AG04449 (cell line): ENCODE measurements at regions of chr14 and their contacts with region 1.

Region 1: GRCh38 chr14:23454445-23454856 is 15.1 kb upstream of the NGDN start:
- DNase-seq: no peak
- H3K4me3 ChIP-seq: no peak overlapping the region
- CTCF ChIP-seq: no peak

Region 2: DNA sequence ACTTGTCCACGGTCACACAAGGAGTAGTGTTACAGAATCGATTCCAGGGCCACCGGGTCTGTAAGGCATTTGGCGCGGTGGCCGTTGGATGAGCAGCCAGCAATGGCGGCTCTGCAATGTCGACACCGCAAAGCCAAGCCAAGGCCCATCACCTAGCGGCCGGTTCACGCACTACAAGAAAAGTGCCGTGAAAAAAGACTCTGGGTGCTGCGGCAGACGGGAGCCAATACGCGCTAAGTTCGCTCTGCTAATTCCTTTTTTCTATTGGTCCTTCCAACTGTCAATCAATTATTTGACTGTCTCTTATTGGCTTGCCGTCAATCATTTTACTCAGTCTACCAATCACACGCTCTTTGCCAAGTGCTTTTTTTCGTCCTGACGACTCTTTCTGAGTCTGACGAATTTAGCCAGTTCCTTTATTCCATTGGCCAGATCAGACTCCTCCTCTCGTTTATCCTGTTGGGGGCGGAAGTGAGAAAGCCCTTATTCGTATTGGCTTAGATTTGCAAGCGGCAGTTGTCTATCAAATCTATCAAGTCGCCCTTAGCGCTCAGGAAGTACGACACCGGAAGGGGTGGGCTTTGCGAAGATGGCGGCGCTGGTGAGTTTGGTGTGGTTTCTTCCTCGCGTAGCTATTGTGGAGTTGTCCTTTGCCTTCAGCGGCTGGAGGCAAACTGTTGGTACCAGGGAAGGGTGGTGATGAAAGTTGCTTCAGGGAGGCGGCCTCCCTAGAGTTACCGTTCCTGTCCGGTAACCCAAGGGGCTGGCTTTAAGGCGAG is 14.9 kb after region 1 on chr14 and contains the start of gene NGDN:
- CTCF ChIA-PET with region 1: interaction called, 13 read pairs
- POLR2A ChIA-PET with region 1: no interaction called
- DNase-seq: peak; percentile 100
- H3K4me3 ChIP-seq: peak within 1 kb of the TSS; percentile 98
- CTCF ChIP-seq: peak; percentile 82

Region 3: DNA sequence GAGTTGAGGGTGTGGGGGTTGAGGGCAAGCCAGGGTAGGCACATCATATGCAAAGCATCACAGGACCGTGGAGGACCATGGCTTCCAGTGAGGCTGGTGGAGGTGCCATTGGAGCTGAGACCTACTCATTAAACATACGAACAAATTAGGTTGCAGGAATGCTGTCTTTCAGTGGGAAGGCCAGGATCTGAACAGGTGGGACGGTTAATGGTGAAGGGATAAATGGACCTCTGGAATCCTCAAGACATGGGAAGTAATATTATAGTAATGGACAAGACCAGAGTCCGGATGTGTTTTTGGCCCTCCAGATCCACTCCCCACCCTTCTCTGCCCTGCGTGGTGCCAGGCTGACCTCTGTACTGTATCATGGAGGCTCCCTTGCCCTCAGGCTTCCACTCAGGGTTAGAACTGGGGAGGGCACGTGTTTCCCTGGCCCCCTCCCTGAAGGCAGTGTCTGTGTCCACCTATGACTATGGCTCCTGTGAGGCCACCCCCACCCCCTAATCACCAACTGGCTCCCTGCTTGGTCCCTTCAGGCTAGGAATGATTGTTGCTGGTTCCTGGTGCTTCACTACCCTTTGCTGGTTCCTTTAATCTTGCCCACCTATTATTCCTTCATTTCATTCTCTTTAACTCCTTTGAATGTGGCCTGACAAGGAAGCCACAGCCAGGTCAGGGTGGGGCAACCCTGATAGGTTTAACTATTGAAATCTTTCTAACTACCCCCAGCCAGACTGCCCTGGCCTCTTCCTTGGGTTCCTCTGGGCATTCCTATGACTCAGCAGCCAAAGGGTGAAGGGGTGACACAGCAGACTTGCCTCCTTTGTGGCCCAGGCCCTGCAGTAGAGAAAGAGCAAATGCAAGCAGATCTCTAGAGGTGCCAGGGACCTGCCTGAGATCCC is 192.4 kb after region 1 on chr14:
- CTCF ChIA-PET with region 1: no interaction called
- POLR2A ChIA-PET with region 1: no interaction called
- DNase-seq: no peak
- H3K4me3 ChIP-seq: no peak overlapping the region
- CTCF ChIP-seq: no peak